Panc1 (cell line): ENCODE measurements at regions of chr19 and their contacts with region 1.

Region 1: DNA sequence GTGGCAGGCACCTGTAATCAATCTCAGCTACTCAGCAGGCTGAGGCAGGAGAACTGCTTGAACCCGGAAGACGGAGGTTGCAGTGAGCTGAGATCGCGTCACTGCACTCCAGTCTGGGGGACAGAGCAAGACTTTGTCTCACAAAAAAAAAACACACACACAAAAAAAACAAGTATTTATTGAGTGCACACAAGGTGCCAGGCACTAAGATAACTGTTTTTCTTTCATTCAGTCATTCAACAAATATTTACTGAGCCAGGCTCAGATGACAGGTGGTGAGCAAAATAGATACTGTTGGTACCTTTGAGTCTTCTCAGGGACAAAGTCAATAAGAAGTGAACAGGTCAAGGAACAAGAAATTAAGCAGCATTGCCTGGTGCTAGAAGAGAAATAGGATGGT is 6.2 kb downstream of the CIB3 start:
- DNase-seq: no peak
- ATAC-seq: no peak
- H3K4me3 ChIP-seq: no peak overlapping the region
- H3K27ac ChIP-seq: no peak overlapping the region
- H3K4me1 ChIP-seq: no peaks in the 10 kb centered on the region
- H3K27me3 ChIP-seq: no peaks in the 10 kb centered on the region
- CTCF ChIP-seq: no peak

Region 2: GRCh38 chr19:16106121-16106520 is 61.0 kb before region 1 on chr19:
- CTCF ChIA-PET with region 1: no interaction called
- POLR2A ChIA-PET with region 1: no interaction called
- in situ Hi-C with region 1: no loop called
- intact Hi-C with region 1: no loop called
- DNase-seq: peak; percentile 36
- ATAC-seq: peak; percentile 54
- H3K4me3 ChIP-seq: no peak overlapping the region
- H3K27ac ChIP-seq: no peak overlapping the region
- H3K4me1 ChIP-seq: no peaks in the 10 kb centered on the region
- H3K27me3 ChIP-seq: no peaks in the 10 kb centered on the region
- CTCF ChIP-seq: no peak

Region 3: GRCh38 chr19:16495982-16496612 is 329.0 kb after region 1 on chr19 and contains the starts of genes C19orf44 and CALR3:
- CTCF ChIA-PET with region 1: interaction called, 17 read pairs
- POLR2A ChIA-PET with region 1: no interaction called
- in situ Hi-C with region 1: no loop called
- intact Hi-C with region 1: no loop called
- DNase-seq: peak; percentile 89
- ATAC-seq: peak; percentile 100
- H3K4me3 ChIP-seq: peak within 1 kb of the TSS; percentile 78 to 80
- H3K27ac ChIP-seq: peak within 1 kb of the TSS; percentile 85
- H3K4me1 ChIP-seq: no peaks in the 10 kb centered on the region
- H3K27me3 ChIP-seq: no peaks in the 10 kb centered on the region
- CTCF ChIP-seq: no peak
- total RNA-seq, gene C19orf44: 4.4 TPM
- total RNA-seq, gene CALR3: not detected